Activated CD8-positive, alpha-beta T cell treated with anti-CD3 and anti-CD28 coated beads, Interleukin-2, amount 10 ng/mL, durations not matched to agents 7 days and 5 days (primary cell): ENCODE measurements at regions of chr13 and their contacts with region 1.

Region 1: GRCh38 chr13:100608906-100609305 is 20.3 kb upstream of the GGACT start:
- DNase-seq: peak; percentile 54
- ATAC-seq: peak; percentile 96
- H3K4me3 Mint-ChIP-seq: no peak overlapping the region
- H3K27ac Mint-ChIP-seq: peak overlapping the region; percentile 91
- H3K4me1 Mint-ChIP-seq: peaks cover 46% of the 10 kb centered on the region
- H3K27me3 Mint-ChIP-seq: no peaks in the 10 kb centered on the region

Region 2: DNA sequence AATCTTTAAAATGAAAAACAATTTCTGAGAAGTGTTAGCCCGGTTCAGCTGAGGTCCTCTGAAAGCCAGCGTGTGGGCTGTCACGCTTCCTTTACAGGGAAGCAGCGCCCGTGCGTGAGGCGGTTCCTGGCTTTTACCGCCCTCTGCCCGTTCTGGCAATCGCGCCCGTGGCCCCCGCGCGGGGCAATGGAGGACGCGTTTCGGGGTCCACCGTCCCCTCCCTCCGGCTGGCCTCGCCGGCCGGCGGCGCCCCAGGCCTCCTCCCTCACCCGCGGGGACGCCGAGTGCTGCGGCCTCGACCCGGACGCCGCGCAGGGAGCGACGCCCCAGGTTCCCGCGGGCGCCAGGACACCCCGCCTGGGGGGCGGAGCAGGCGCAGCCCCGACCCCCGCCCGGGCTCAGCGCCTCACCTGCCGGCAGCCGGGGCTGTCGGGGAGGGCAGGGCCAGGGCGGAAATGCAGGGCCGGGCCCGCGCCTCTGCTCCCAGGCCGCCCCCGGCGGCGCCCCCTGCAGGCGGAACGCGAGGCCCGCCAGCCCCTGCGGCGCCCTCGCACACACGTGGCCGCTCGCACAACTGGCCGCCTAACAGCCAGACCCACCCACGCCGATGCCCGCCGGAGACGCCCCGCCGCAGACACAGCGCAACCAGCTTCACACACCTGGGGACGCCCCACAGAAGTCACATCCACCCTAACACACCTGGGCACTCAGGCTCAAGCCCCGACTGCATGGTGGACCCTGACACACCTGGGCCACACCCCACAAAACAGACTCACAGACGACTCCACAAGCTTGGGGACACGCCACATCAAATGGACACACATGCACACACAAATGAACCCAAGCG is 20.4 kb before region 1 on chr13 and contains the start of gene GGACT:
- CTCF ChIA-PET with region 1: interaction called, 17 read pairs
- POLR2A ChIA-PET with region 1: interaction called, 4 read pairs
- DNase-seq: peak; percentile 86
- ATAC-seq: peak; percentile 85
- H3K4me3 Mint-ChIP-seq: peak within 1 kb of the TSS; percentile 76
- H3K27ac Mint-ChIP-seq: peak within 1 kb of the TSS; percentile 95
- H3K4me1 Mint-ChIP-seq: peaks cover 65% of the 10 kb centered on the region
- H3K27me3 Mint-ChIP-seq: no peaks in the 10 kb centered on the region
- total RNA-seq, gene GGACT: 3.1 to 3.5 TPM